GM10248 (cell line): ENCODE measurements at regions of chr18 and their contacts with region 1.

Region 1: GRCh38 chr18:9117980-9118841 is 15.7 kb downstream of the NDUFV2 start:
- DNase-seq: no peak
- CTCF ChIP-seq: no peak

Region 2: GRCh38 chr18:9102508-9103375 is 15.5 kb before region 1 on chr18 and contains the start of gene NDUFV2:
- CTCF ChIA-PET with region 1: interaction called, 4 read pairs
- POLR2A ChIA-PET with region 1: interaction called, 11 read pairs
- DNase-seq: peak; percentile 99
- CTCF ChIP-seq: no peak

Region 3: GRCh38 chr18:9193031-9193430 is 74.8 kb after region 1 on chr18:
- CTCF ChIA-PET with region 1: no interaction called
- POLR2A ChIA-PET with region 1: interaction called, 10 read pairs
- DNase-seq: no peak
- CTCF ChIP-seq: no peak

Region 4: GRCh38 chr18:9243029-9243428 is 124.8 kb after region 1 on chr18:
- CTCF ChIA-PET with region 1: no interaction called
- POLR2A ChIA-PET with region 1: no interaction called
- DNase-seq: peak; percentile 14
- CTCF ChIP-seq: no peak